PC-9 (cell line): ENCODE measurements at regions of chr9 and their contacts with region 1.

Region 1: DNA sequence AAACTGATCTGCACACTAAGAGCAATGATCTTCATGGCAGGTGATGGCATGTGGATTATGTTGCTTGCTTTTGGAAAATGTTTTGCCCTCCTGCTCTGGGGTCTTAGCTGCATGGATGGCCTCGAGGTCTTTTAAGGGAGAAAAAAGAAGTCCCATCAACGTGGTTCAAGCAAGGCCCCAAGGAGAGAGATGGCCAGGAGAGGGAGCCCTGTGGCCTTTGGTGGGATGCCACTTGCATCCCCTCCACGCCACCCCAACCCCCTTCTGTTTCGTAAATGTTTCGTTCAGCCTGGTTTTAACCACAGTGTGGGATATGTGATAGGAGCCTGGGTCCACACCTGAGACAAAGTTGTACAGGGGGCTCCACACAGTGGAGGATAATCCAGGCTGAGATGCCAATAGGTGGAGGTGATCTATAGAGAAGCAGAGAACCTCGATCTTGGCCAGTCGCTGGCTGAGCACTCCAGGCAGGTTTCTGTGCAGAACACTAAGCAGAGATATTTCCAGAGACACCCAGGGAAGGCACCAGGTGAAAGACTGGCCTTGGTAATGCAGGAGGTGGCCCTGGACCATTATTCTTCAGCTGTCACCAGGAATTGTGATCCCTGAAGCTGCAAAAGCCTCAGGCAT is 25.8 kb upstream of the FRRS1L start:
- DNase-seq: peak in 1 of 2 experiments; percentile 38
- H3K4me3 ChIP-seq: no peak overlapping the region
- H3K27ac ChIP-seq: no peak overlapping the region
- H3K4me1 ChIP-seq: no peaks in the 10 kb centered on the region
- H3K27me3 ChIP-seq: no peaks in the 10 kb centered on the region
- CTCF ChIP-seq: peak; percentile 65

Region 2: GRCh38 chr9:108889649-108890067 is 303.2 kb before region 1 on chr9:
- CTCF ChIA-PET with region 1: no interaction called
- POLR2A ChIA-PET with region 1: interaction called, 11 read pairs
- intact Hi-C with region 1: no loop called
- DNase-seq: no peak
- H3K4me3 ChIP-seq: no peak overlapping the region
- H3K27ac ChIP-seq: no peak overlapping the region
- H3K4me1 ChIP-seq: peaks cover 9% of the 10 kb centered on the region
- H3K27me3 ChIP-seq: no peaks in the 10 kb centered on the region
- CTCF ChIP-seq: no peak

Region 3: GRCh38 chr9:108933718-108934322 is 259.0 kb before region 1 on chr9 and contains the start of gene ELP1:
- CTCF ChIA-PET with region 1: interaction called, 4 read pairs
- POLR2A ChIA-PET with region 1: no interaction called
- intact Hi-C with region 1: loop called (anchors 10 kb)
- DNase-seq: peak; percentile 91 to 93
- H3K4me3 ChIP-seq: peak within 1 kb of the TSS; percentile 99
- H3K27ac ChIP-seq: peak within 1 kb of the TSS; percentile 80
- H3K4me1 ChIP-seq: peaks cover 20% of the 10 kb centered on the region
- H3K27me3 ChIP-seq: no peaks in the 10 kb centered on the region
- CTCF ChIP-seq: no peak
- total RNA-seq, gene ELP1: 29.6 and 35.1 TPM in 2 replicates

Region 4: DNA sequence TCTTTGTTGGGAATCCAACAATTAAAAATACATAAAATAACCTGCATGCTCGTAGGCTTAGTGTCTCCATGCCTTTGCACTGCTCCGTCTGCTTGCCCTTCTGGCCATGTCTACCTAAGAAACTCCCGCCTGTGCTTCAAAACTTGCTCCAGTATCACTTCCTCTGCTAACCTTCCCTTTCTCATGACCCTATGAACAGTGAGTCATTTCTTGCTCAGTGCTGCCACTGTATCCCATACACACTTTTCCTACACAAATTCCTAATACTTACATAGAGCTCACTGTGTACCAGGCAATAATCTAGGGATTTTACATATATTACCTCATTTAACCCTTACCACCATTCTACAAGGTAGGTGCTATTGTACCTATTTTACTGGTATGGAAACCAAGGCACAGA is 106.6 kb before region 1 on chr9:
- CTCF ChIA-PET with region 1: no interaction called
- POLR2A ChIA-PET with region 1: no interaction called
- intact Hi-C with region 1: no loop called
- DNase-seq: peak in 1 of 2 experiments; percentile 56
- H3K4me3 ChIP-seq: no peak overlapping the region
- H3K27ac ChIP-seq: peak overlapping the region; percentile 82
- H3K4me1 ChIP-seq: peaks cover 23% of the 10 kb centered on the region
- H3K27me3 ChIP-seq: no peaks in the 10 kb centered on the region
- CTCF ChIP-seq: no peak

Region 5: DNA sequence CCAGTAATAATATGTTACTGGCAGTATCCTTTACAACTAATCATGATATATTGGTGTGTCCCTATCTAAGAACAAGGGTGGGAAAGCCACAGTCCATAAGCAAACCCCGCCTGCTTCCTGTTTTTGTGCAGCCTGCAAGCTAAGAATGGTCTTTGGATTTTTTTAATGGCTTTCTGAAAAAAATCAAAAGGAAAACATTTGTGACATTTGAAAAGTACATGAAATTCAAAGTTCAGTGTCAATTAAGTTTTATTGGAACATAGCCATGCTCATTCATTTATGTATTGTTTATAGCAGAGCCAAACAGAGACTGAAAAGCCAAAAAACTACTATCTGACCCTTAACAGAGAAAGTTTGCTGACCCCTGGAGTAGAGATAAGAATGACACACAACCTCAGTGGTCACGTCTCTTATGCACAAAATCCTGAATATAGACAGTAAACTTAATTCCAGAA is 60.3 kb before region 1 on chr9:
- CTCF ChIA-PET with region 1: no interaction called
- POLR2A ChIA-PET with region 1: no interaction called
- intact Hi-C with region 1: no loop called
- DNase-seq: no peak
- H3K4me3 ChIP-seq: no peak overlapping the region
- H3K27ac ChIP-seq: no peak overlapping the region
- H3K4me1 ChIP-seq: no peaks in the 10 kb centered on the region
- H3K27me3 ChIP-seq: no peaks in the 10 kb centered on the region
- CTCF ChIP-seq: no peak

Region 6: DNA sequence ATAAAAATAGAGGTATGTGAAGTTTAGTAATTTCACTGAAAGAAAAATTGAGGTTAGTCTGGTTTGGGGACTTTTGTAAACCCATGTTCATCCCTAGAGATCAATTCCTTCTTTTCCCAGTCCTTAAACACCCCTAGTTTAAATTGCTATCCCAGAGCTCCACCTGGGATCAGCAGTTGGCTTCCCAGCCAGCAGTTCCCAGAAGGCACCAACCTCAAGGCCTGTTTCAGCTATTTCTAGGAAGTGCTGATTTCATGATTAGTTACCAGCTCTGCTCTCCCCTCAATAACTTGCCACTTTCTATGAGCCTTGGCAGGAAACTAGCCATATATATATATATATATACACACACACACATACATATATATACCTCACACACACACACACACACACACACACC is 97.5 kb after region 1 on chr9:
- CTCF ChIA-PET with region 1: no interaction called
- POLR2A ChIA-PET with region 1: interaction called, 38 read pairs
- intact Hi-C with region 1: no loop called
- DNase-seq: no peak
- H3K4me3 ChIP-seq: no peak overlapping the region
- H3K27ac ChIP-seq: peak overlapping the region; percentile 51
- H3K4me1 ChIP-seq: peaks cover 32% of the 10 kb centered on the region
- H3K27me3 ChIP-seq: no peaks in the 10 kb centered on the region
- CTCF ChIP-seq: no peak

Region 7: DNA sequence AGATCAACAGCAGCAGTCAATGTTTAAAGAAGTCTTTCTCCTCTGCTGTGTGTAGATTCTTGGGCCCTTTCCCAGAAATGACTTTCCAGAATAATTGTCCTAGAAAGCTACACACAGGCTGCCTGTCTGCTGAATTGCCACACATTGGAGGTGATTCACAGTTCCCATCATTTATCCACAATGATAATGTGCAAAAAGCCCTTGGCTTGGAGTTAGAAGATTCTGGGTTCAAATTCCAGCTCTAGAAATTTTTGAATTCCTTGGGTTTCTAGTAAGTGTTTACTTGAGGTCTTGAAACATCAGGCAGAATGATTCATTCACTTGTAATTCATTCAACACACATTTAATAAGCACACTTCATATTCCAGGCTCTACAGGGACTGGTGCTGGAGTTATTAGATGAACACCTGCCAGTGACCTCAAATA is 156.6 kb after region 1 on chr9:
- CTCF ChIA-PET with region 1: interaction called, 14 read pairs
- POLR2A ChIA-PET with region 1: no interaction called
- intact Hi-C with region 1: no loop called
- DNase-seq: peak; percentile 26 to 94
- H3K4me3 ChIP-seq: no peak overlapping the region
- H3K27ac ChIP-seq: peak overlapping the region; percentile 29; the same call in 1 of the 2 replicates
- H3K4me1 ChIP-seq: peaks cover 40% of the 10 kb centered on the region
- H3K27me3 ChIP-seq: no peaks in the 10 kb centered on the region
- CTCF ChIP-seq: no peak